ENCODE measurements at regions of chr14 and their contacts with region 1.

Region 1: DNA sequence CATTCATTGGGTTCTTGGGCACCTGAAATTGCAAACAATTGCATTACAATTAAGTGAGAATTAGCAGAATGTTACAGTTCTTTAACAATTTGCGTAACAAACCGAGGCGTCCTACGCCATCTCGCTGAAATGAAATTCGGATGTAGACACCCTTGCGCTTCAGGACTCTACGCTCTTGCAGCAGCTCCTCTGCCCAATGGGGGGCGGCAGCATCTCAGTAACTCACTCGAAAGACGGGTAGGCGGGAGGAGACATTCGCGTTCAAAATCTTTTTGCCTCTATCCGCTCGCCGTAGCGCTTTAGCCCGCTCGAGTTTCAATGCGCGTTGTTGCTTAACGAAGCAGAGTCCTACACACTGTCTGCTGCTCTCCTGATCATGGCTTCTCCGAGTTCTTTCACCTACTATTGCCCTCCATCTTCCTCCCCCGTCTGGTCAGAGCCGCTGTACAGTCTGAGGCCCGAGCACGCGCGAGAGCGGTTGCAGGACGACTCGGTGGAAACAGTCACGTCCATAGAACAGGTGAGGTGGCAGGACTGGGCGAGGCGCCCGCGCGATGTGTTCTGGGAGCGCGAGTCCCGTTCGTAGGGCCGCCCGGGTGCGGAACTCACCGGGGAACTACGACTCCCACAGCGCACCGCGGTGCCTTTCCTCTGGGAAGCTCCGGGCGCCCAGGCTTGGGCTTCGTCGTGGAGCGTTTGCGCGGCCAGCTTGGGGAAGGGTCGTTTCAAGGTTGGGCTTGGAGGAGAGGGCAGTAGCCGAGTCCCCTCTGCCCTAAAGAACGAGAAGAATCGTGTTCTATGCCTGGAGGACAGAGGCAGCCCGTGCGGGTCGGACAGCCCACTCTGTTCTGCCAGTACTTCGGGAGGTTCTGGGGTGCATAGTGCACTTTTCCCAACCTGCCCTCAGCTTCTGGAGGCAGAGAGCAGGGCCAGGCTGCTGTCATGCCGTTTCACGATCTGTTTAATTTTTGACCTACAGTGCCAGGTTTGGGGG is at the start of gene FNTB:
- DNase-seq: peak; percentile 94 to 95
- ATAC-seq: peak; percentile 94
- H3K4me3 ChIP-seq: peak within 1 kb of the TSS; percentile 67 to 85 (median 74)
- H3K27ac ChIP-seq: peak within 1 kb of the TSS; percentile 86 to 93 (median 92)
- H3K4me1 ChIP-seq: peaks cover 11 to 14% of the 10 kb centered on the region in 2 donors
- H3K27me3 ChIP-seq: no peaks in the 10 kb centered on the region
- CTCF ChIP-seq: peak; percentile 58 to 83 (median 74)
- POLR2A ChIP-seq: peak; percentile 72 to 75
- total RNA-seq, gene FNTB: 6.1 to 40.6 (median 18.0) TPM

Region 2: DNA sequence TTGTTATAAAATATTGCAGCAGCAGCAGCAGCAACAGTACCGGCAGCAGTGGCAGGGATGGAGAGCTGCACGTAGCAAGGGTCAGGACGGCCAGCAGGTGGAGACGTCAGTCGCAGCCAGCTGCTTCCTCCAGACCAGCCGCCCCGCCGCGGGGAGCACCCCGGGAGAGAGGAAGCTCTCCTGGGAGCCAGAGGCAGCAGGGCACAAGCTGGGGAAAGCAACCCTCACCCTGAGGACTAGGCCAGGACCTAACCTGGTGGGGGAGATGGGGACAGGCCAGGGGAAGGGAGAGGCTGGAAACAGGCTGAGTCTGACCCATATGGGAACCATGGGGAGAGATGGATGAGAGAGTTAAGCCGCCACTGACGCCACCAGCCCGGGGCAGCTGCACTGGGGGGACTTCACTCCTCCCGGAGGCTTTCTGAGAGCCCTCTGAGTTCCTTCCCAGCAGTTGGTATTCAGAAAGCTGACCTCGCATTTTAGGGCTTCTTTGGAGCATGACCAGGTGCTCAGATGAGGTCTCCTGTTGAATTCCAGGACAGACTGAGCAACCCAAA is 163.5 kb before region 1 on chr14:
- in situ Hi-C with region 1: loop called in 1 of 4 experiments (anchors 10 kb)
- intact Hi-C with region 1: no loop called
- DNase-seq: peak; percentile 71 to 81
- ATAC-seq: peak in 1 of 2 donors; percentile 25
- H3K4me3 ChIP-seq: peak overlapping the region in 2 of 4 donors; percentile 23 to 39
- H3K27ac ChIP-seq: peak overlapping the region; percentile 93 to 98 (median 96)
- H3K4me1 ChIP-seq: peaks cover 60 to 62% of the 10 kb centered on the region in 2 donors
- H3K27me3 ChIP-seq: no peaks in the 10 kb centered on the region
- CTCF ChIP-seq: peak; percentile 83 to 92 (median 89)
- POLR2A ChIP-seq: peak in 1 of 2 donors; percentile 12

Region 3: GRCh38 chr14:64928239-64929013 is 58.4 kb before region 1 on chr14:
- in situ Hi-C with region 1: no loop called
- intact Hi-C with region 1: no loop called
- DNase-seq: no peak
- ATAC-seq: no peak
- H3K4me3 ChIP-seq: no peak overlapping the region
- H3K27ac ChIP-seq: no peak overlapping the region
- H3K4me1 ChIP-seq: peaks cover 19 to 38% of the 10 kb centered on the region in 2 donors
- H3K27me3 ChIP-seq: no peaks in the 10 kb centered on the region
- CTCF ChIP-seq: no peak
- POLR2A ChIP-seq: no peak

Region 4: GRCh38 chr14:65019944-65020566 is 33.2 kb after region 1 on chr14:
- in situ Hi-C with region 1: no loop called
- intact Hi-C with region 1: loop called (anchors 2 kb)
- DNase-seq: peak in 1 of 2 donors; percentile 37
- ATAC-seq: peak; percentile 62 to 64
- H3K4me3 ChIP-seq: no peak overlapping the region
- H3K27ac ChIP-seq: peak overlapping the region in 2 of 4 donors; percentile 2 to 44
- H3K4me1 ChIP-seq: peaks cover 15 to 18% of the 10 kb centered on the region in 2 donors
- H3K27me3 ChIP-seq: no peaks in the 10 kb centered on the region
- CTCF ChIP-seq: peak in 4 of 5 experiments; percentile 49 to 72 (median 64)
- POLR2A ChIP-seq: no peak

Region 5: GRCh38 chr14:65156568-65157366 is 169.9 kb after region 1 on chr14:
- in situ Hi-C with region 1: no loop called
- intact Hi-C with region 1: loop called (anchors 2 kb)
- DNase-seq: peak; percentile 14 to 44
- ATAC-seq: peak; percentile 75 to 91
- H3K4me3 ChIP-seq: peak overlapping the region in 1 of 4 donors; percentile 9
- H3K27ac ChIP-seq: peak overlapping the region; percentile 55 to 80 (median 66)
- H3K4me1 ChIP-seq: peaks cover 4 to 8% of the 10 kb centered on the region in 2 donors
- H3K27me3 ChIP-seq: no peaks in the 10 kb centered on the region
- CTCF ChIP-seq: no peak
- POLR2A ChIP-seq: no peak

Region 6: GRCh38 chr14:65361920-65362319 is 375.0 kb after region 1 on chr14:
- in situ Hi-C with region 1: loop called in 2 of 4 experiments (anchors 25 kb)
- intact Hi-C with region 1: loop called (anchors 5 kb)
- DNase-seq: peak; percentile 71 to 79
- ATAC-seq: peak; percentile 97 to 98
- H3K4me3 ChIP-seq: no peak overlapping the region
- H3K27ac ChIP-seq: peak overlapping the region; percentile 72 to 81 (median 78)
- H3K4me1 ChIP-seq: peaks cover 35 to 39% of the 10 kb centered on the region in 2 donors
- H3K27me3 ChIP-seq: no peaks in the 10 kb centered on the region
- CTCF ChIP-seq: no peak
- POLR2A ChIP-seq: no peak

Region 7: GRCh38 chr14:65824285-65824977 is 837.6 kb after region 1 on chr14:
- in situ Hi-C with region 1: loop called in 2 of 4 experiments (anchors 25 kb)
- intact Hi-C with region 1: loop called (anchors 2 kb)
- DNase-seq: peak; percentile 10 to 39
- ATAC-seq: peak; percentile 84 to 88
- H3K4me3 ChIP-seq: no peak overlapping the region
- H3K27ac ChIP-seq: no peak overlapping the region
- H3K4me1 ChIP-seq: no peaks in the 10 kb centered on the region
- H3K27me3 ChIP-seq: no peaks in the 10 kb centered on the region
- CTCF ChIP-seq: peak; percentile 56 to 91 (median 78)
- POLR2A ChIP-seq: no peak